ENCODE measurements at regions of chr20 and their contacts with region 1.

Region 1: DNA sequence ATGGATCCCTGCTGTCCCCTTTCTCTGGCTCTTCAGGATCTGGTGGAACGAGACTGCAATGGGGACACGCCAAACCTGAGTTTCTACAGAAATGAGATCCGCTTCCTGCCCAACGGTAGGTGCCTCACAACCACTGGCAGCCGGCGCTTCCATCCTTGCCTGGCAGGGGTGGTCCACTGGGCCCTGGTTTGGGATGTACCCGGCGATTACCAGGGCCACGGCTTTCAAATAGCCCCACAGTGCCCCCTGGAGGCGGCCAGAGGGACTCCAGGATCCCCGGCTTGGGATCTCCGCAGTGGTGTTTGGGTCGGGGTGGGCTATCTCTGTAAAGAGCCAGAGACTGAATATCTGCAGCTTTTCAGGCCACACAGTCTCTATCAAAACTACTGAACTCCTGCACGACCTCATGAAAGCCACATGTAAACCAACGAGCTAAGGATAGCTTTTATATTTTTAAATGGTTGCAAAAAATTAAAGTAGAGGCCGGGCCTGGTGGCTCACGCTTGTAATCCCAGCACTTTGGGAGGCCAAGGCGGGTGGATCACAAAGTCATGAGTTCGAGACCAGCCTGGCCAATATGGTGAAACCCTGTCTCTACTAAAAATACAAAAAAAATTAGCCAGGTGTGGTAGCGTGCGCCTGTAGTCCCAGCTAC is 3.7 kb downstream of the OGFR start:
- DNase-seq: peak; percentile 82
- H3K4me3 Mint-ChIP-seq: no peak overlapping the region
- H3K27ac Mint-ChIP-seq: no peak overlapping the region
- H3K4me1 Mint-ChIP-seq: peaks cover 24% of the 10 kb centered on the region
- H3K27me3 Mint-ChIP-seq: no peaks in the 10 kb centered on the region

Region 2: DNA sequence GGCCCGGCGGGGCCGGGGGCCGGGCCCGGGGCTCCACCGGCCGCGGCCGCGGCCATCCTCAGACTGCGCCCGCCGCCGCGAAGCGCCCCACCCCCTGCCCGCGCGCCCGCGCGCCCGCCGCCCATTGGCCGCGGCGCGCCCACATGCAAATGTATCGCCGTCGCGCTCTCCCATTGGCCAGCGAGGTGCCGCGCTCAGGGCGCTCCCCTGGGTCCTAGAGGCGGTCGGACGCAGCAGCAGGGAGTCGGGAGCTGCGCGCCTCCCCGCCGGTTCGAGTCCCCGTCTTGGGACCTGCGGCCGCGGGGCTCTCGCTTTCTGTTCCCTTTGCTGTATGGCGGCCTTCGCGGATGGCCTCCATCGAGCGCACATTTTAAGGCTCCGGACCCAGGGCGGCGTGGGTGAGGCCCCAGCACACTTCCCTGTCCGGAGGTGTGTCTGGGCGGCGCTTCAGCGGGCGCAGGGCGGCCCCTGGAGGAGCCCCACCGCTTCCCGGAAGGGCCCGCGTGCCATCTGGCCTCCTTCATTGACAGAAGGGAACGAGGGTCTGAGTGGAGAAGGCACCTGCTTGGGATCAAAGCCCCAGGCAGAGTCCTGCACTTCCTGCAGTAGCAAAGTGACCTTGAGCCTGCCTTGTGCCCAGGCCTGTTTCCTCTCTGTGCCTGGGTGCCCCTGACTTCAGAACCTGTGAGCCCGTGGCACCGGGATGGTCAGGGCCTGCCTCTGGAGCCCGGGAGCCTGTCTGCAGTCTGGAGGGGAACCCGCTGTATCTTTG is 400.9 kb before region 1 on chr20 and contains the start of gene CABLES2:
- CTCF ChIA-PET with region 1: no interaction called
- intact Hi-C with region 1: loop called (anchors 5 kb)
- DNase-seq: peak; percentile 94
- H3K4me3 Mint-ChIP-seq: peak within 1 kb of the TSS; percentile 78
- H3K27ac Mint-ChIP-seq: peak within 1 kb of the TSS; percentile 80
- H3K4me1 Mint-ChIP-seq: peaks cover 31% of the 10 kb centered on the region
- H3K27me3 Mint-ChIP-seq: no peaks in the 10 kb centered on the region
- total RNA-seq, gene CABLES2: 3.6 to 5.1 TPM

Region 3: DNA sequence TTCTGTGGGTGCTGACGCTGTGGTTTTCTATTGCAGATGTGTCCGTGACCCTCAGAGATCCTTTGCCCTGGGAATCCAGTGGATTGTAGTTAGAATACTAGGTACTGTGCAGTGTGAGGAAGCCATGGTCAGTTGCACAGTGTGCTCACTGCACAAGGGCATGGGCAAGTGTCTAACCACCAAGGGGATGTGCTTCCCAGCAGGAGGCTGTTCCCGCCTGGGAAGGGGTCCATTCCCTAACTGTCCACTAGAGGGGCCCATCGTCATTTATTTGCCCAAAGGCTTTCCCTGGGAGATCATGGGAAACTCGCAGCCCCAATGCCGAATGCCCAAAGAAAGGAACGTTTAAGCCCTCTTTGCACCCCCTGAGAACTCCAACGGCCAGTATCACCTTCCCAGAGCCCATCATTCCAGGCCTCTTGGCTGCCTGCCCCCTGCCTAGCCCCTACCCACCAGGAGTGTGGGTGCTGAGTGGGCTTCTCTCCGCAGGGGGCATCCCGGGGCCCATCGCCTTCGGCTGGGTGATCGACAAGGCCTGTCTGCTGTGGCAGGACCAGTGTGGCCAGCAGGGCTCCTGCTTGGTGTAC is 139.8 kb before region 1 on chr20:
- CTCF ChIA-PET with region 1: interaction called, 4 read pairs
- intact Hi-C with region 1: loop called (anchors 1 kb)
- DNase-seq: peak; percentile 43
- H3K4me3 Mint-ChIP-seq: no peak overlapping the region
- H3K27ac Mint-ChIP-seq: no peak overlapping the region
- H3K4me1 Mint-ChIP-seq: no peaks in the 10 kb centered on the region
- H3K27me3 Mint-ChIP-seq: no peaks in the 10 kb centered on the region

Region 4: GRCh38 chr20:62704301-62704948 is 103.9 kb before region 1 on chr20:
- CTCF ChIA-PET with region 1: no interaction called
- intact Hi-C with region 1: loop called (anchors 5 kb)
- DNase-seq: no peak
- H3K4me3 Mint-ChIP-seq: no peak overlapping the region
- H3K27ac Mint-ChIP-seq: no peak overlapping the region
- H3K4me1 Mint-ChIP-seq: peaks cover 6% of the 10 kb centered on the region
- H3K27me3 Mint-ChIP-seq: peaks cover 11% of the 10 kb centered on the region